ENCODE measurements at regions of chr7 and their contacts with region 1.

Region 1: DNA sequence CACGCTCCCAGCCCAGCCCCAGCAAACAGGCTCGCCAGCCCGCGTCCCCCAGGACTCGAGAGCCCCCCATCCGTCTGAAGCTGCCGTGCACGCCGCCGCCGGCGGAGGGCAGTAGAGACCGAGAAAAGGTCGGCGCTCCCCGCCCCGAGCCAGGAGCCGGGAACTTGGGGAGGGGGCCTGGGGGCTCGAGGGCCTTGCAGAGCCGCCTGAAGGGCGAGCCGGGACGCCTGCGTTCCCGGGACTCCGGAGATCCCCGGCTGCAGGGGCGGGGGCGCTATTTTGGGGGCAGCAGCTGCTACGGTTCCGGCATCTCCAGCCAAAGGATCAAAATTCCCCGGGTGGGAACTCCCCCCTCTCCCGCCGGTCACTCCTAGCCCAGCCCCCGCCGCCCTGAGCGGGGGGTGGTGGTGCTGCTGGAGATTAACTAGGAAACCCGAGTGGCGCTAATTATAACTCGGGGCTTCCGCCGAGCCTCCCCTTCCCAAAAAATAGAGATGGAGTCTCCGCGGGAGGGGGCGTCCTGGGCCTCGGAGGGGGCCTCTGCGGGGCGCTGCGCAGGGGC is 747 bp downstream of the ACHE start:
- DNase-seq: no peak
- H3K4me3 ChIP-seq: peak overlapping the region; percentile 47 to 51
- H3K27ac ChIP-seq: peak overlapping the region; percentile 25
- H3K4me1 ChIP-seq: peaks cover 38% of the 10 kb centered on the region
- H3K27me3 ChIP-seq: no peaks in the 10 kb centered on the region
- CTCF ChIP-seq: peak; percentile 66 to 89 (median 74)
- POLR2A ChIP-seq: no peak

Region 2: GRCh38 chr7:101058355-101058754 is 163.4 kb after region 1 on chr7:
- intact Hi-C with region 1: loop called (anchors 5 kb)
- DNase-seq: no peak
- H3K4me3 ChIP-seq: no peak overlapping the region
- H3K27ac ChIP-seq: no peak overlapping the region
- H3K4me1 ChIP-seq: no peaks in the 10 kb centered on the region
- H3K27me3 ChIP-seq: no peaks in the 10 kb centered on the region
- CTCF ChIP-seq: no peak
- POLR2A ChIP-seq: no peak

Region 3: GRCh38 chr7:101077303-101078089 is 182.6 kb after region 1 on chr7:
- intact Hi-C with region 1: loop called (anchors 5 kb)
- DNase-seq: no peak
- H3K4me3 ChIP-seq: no peak overlapping the region
- H3K27ac ChIP-seq: no peak overlapping the region
- H3K4me1 ChIP-seq: no peaks in the 10 kb centered on the region
- H3K27me3 ChIP-seq: no peaks in the 10 kb centered on the region
- CTCF ChIP-seq: peak; percentile 53 to 63 (median 62)
- POLR2A ChIP-seq: no peak